GM10248 (cell line): ENCODE measurements at regions of chr11 and their contacts with region 1.

Region 1: DNA sequence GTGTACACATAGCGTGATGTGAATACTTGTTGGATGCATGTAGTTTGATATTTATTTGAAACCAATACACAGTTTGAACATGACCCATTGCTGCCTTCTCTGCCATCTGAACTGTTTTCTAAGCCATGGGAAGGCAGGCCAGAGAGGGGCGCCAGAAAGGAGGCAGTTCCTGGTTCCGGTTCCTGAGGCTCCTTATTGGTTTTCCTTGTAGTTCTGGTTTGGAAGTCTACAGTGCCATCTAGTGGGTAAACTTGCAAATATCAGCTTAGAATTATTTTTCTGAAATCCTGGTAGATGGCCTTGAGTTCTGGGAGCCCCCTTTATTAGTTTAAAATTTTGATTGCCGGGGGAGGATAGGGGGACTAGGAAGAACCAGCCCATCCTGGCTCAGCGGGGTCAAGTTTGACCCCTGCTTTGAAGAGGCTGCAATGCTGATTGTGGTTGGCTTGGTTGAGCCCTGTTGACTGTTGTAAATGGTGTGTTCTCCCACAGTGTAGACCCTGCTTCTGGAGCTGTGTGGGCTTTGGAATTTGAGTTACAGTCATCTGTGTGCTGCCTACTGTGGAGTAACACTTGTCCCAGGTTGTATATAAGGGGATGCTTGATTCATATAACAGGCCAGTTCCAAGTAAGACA is 48.4 kb downstream of the GRAMD1B start:
- DNase-seq: peak; percentile 53
- CTCF ChIP-seq: peak; percentile 42

Region 2: DNA sequence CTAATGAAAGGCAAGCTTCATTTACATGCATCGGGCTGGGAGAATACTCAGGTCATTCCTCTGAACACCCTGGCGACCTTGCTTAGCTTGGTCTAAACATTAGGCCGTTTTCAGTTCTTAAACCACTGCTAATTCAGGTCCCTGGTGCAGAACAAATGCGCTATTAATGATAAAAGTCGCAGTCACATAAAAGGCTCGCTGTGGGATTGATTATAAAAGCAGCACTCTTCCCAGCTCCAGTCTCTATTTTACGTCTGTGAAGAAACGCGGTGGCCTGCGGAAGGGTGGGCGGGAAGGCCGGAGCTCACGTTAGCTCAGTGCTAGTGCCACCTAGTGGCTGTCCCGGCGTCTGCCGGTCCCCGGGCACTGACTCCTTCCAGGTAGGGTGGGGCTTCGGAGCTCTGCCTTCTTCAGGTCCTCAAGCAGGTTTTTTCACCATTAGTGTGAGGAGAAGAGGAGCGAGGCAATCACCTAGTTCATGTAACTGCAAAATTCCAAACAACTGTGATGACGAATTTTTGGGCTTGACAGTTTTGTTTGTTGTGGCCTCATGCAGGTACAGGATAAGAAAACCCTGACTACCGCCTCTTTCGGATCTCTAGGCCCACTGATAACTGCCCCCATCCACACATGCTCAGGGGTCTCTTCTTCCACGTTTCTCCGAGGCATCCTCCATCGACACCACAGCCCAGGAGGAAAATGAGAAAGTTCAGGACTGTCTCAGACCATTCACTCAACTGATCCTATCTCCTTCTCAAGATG is 216.9 kb before region 1 on chr11:
- CTCF ChIA-PET with region 1: interaction called, 14 read pairs
- POLR2A ChIA-PET with region 1: no interaction called
- DNase-seq: peak; percentile 76
- CTCF ChIP-seq: peak; percentile 89

Region 3: DNA sequence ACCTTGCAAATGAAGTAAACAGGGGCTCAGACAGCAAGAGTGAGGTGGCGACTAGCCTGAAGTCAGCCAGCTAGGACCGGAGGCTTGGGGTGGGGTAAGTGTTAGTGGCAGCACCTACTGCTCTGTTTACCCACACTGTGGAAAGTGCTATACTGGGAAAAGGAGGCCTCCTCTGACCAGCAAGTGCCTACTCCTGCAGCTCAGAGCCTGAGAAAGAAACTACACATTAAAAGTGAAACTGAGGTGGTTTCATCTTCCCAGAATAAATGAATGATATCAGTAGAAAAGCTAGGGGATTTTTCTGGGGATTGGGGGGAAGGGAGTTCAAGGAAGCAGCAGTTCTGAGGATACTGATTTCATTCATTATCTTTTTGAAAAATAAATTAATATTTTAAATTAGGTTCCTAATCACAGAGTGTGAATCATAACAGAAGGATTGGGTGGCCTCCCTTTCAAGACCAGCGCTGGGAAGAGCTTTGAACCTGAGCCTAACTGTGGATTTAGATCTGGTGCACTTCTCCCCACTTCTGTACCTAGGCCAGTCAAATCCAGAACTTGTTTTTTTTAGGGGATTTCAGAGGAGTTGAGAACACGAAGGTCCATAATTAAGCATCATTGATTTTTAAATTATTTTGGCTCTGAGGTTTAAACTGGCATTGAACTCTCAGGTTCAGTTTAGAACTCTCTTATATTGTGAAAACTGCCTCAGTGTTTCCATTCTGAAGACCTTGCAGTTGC is 96.5 kb before region 1 on chr11:
- CTCF ChIA-PET with region 1: interaction called, 10 read pairs
- POLR2A ChIA-PET with region 1: no interaction called
- DNase-seq: peak; percentile 38
- CTCF ChIP-seq: no peak

Region 4: GRCh38 chr11:123461164-123461563 is 17.3 kb before region 1 on chr11:
- CTCF ChIA-PET with region 1: interaction called, 14 read pairs
- POLR2A ChIA-PET with region 1: no interaction called
- DNase-seq: no peak
- CTCF ChIP-seq: no peak

Region 5: GRCh38 chr11:123549926-123550917 is 71.8 kb after region 1 on chr11:
- CTCF ChIA-PET with region 1: no interaction called
- POLR2A ChIA-PET with region 1: no interaction called
- DNase-seq: no peak
- CTCF ChIP-seq: no peak